ENCODE measurements at regions of chr15 and their contacts with region 1.

Region 1: GRCh38 chr15:80455668-80456442 is 51.7 kb downstream of the ARNT2 start:
- DNase-seq: peak; percentile 62 to 73 (median 67)
- ATAC-seq: peak; percentile 73
- H3K4me3 ChIP-seq: no peak overlapping the region
- H3K27ac ChIP-seq: no peak overlapping the region
- H3K4me1 ChIP-seq: peaks cover 8% of the 10 kb centered on the region
- H3K27me3 ChIP-seq: no peaks in the 10 kb centered on the region
- CTCF ChIP-seq: peak; percentile 87 to 96 (median 93)
- POLR2A ChIP-seq: no peak

Region 2: GRCh38 chr15:80773122-80773551 is 317.3 kb after region 1 on chr15:
- intact Hi-C with region 1: loop called (anchors 5 kb)
- DNase-seq: no peak
- ATAC-seq: no peak
- H3K4me3 ChIP-seq: no peak overlapping the region
- H3K27ac ChIP-seq: no peak overlapping the region
- H3K4me1 ChIP-seq: no peaks in the 10 kb centered on the region
- H3K27me3 ChIP-seq: no peaks in the 10 kb centered on the region
- CTCF ChIP-seq: no peak
- POLR2A ChIP-seq: no peak

Region 3: GRCh38 chr15:80967451-80967850 is 511.6 kb after region 1 on chr15:
- intact Hi-C with region 1: loop called (anchors 5 kb)
- DNase-seq: peak in 1 of 4 donors; percentile 5
- ATAC-seq: no peak
- H3K4me3 ChIP-seq: no peak overlapping the region
- H3K27ac ChIP-seq: no peak overlapping the region
- H3K4me1 ChIP-seq: no peaks in the 10 kb centered on the region
- H3K27me3 ChIP-seq: no peaks in the 10 kb centered on the region
- CTCF ChIP-seq: no peak
- POLR2A ChIP-seq: no peak